Naive thymus-derived CD4-positive, alpha-beta T cell (primary cell): ENCODE measurements at regions of chr1 and their contacts with region 1.

Region 1: GRCh38 chr1:179954493-179955297 is at the start of gene CEP350:
- DNase-seq: peak; percentile 93 to 99 (median 98)
- ATAC-seq: peak; percentile 92
- H3K4me3 ChIP-seq: peak within 1 kb of the TSS; percentile 67
- H3K4me3 Mint-ChIP-seq: peak within 1 kb of the TSS; percentile 81 to 97 (median 93)
- H3K27ac ChIP-seq: peak within 1 kb of the TSS; percentile 95
- H3K27ac Mint-ChIP-seq: peak within 1 kb of the TSS; percentile 91 to 99 (median 97)
- H3K4me1 ChIP-seq: peaks cover 32 to 42% of the 10 kb centered on the region in 2 donors
- H3K4me1 Mint-ChIP-seq: peaks cover 34 to 72% (median 62%) of the 10 kb centered on the region in 7 donors
- H3K27me3 ChIP-seq: no peaks in the 10 kb centered on the region
- H3K27me3 Mint-ChIP-seq: no peaks in the 10 kb centered on the region
- total RNA-seq, gene CEP350: 56.1 to 90.1 (median 64.4) TPM

Region 2: GRCh38 chr1:179129702-179130473 is 824.8 kb before region 1 on chr1:
- CTCF ChIA-PET with region 1: no interaction called
- POLR2A ChIA-PET with region 1: no interaction called
- intact Hi-C with region 1: loop called in 1 of 2 experiments (anchors 1 kb)
- DNase-seq: peak in 8 of 9 donors; percentile 28 to 83 (median 72)
- ATAC-seq: peak; percentile 95
- H3K4me3 ChIP-seq: peak overlapping the region; percentile 38
- H3K4me3 Mint-ChIP-seq: peak overlapping the region; percentile 63 to 93 (median 80)
- H3K27ac ChIP-seq: peak overlapping the region; percentile 79
- H3K27ac Mint-ChIP-seq: peak overlapping the region; percentile 87 to 96 (median 94)
- H3K4me1 ChIP-seq: peaks cover 4 to 17% of the 10 kb centered on the region in 2 donors
- H3K4me1 Mint-ChIP-seq: peaks cover 3 to 33% (median 22%) of the 10 kb centered on the region in 7 donors
- H3K27me3 ChIP-seq: no peaks in the 10 kb centered on the region
- H3K27me3 Mint-ChIP-seq: no peaks in the 10 kb centered on the region

Region 3: GRCh38 chr1:179917601-179918429 is 36.9 kb before region 1 on chr1:
- CTCF ChIA-PET with region 1: interaction called, 3 read pairs
- POLR2A ChIA-PET with region 1: interaction called, 3 read pairs
- intact Hi-C with region 1: loop called in 1 of 2 experiments (anchors 5 kb)
- DNase-seq: no peak
- ATAC-seq: no peak
- H3K4me3 ChIP-seq: no peak overlapping the region
- H3K4me3 Mint-ChIP-seq: no peak overlapping the region
- H3K27ac ChIP-seq: no peak overlapping the region
- H3K27ac Mint-ChIP-seq: peak overlapping the region in 1 of 9 donors; percentile 20
- H3K4me1 ChIP-seq: no peaks in the 10 kb centered on the region
- H3K4me1 Mint-ChIP-seq: peaks cover 0 to 7% (median 2%) of the 10 kb centered on the region in 7 donors
- H3K27me3 ChIP-seq: no peaks in the 10 kb centered on the region
- H3K27me3 Mint-ChIP-seq: no peaks in the 10 kb centered on the region

Region 4: DNA sequence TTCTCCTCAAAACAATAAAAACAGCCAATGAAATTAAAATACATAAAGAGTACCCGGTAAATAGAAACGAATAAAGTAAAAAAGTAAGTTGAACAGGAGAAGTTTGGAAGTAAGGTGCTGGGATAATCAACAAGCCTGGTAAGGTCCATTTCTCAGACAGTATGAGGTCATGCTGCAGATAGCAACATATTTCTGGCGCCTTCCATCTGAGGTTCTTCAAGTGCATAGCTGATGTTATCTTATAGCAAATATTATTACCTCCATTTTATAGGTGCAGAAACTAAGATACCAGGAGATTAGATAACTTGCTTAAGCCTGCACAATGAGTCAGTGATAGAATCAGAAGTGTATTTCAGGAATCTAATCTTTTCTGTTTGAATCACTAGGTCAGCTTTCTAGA is 23.8 kb before region 1 on chr1:
- CTCF ChIA-PET with region 1: no interaction called
- POLR2A ChIA-PET with region 1: no interaction called
- intact Hi-C with region 1: no loop called
- DNase-seq: no peak
- ATAC-seq: no peak
- H3K4me3 ChIP-seq: no peak overlapping the region
- H3K4me3 Mint-ChIP-seq: no peak overlapping the region
- H3K27ac ChIP-seq: no peak overlapping the region
- H3K27ac Mint-ChIP-seq: no peak overlapping the region
- H3K4me1 ChIP-seq: no peaks in the 10 kb centered on the region
- H3K4me1 Mint-ChIP-seq: no peaks in the 10 kb centered on the region
- H3K27me3 ChIP-seq: no peaks in the 10 kb centered on the region
- H3K27me3 Mint-ChIP-seq: peaks cover 0 to 25% (median 6%) of the 10 kb centered on the region in 5 donors

Region 5: DNA sequence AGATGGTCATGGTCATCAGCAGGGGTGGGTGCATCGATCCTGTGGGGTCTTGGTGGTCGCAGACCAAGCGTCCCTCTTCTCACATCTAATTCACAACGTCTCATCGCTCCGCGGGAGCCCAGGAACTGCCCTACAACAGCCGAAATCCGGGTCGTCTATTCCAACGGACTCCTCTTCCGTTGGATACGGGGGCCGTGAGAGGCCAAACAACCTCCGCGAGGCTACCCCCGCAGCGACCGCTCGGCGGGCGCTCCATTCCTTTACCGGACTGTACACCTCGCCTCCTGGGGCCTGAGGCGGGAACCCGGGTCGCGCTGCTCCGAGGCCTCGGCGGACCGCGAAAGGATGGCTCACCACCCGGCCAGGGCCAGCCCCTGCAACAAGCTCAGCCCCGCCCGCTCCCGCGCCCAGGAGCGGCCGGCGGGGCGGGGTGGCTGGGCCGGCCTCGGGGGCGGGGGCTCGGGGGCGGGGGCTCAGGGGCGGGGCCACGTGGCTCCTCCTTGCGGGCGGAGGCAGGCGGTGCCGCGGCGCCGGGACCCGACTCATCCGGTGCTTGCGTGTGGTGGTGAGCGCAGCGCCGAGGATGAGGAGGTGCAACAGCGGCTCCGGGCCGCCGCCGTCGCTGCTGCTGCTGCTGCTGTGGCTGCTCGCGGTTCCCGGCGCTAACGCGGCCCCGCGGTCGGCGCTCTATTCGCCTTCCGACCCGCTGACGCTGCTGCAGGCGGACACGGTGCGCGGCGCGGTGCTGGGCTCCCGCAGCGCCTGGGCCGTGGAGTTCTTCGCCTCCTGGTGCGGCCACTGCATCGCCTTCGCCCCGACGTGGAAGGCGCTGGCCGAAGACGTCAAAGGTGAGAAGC is 199.9 kb after region 1 on chr1 and contains the start of gene QSOX1:
- CTCF ChIA-PET with region 1: no interaction called
- POLR2A ChIA-PET with region 1: interaction called, 4 read pairs
- intact Hi-C with region 1: loop called (anchors 1 kb)
- DNase-seq: peak; percentile 81 to 89 (median 86)
- ATAC-seq: peak; percentile 97
- H3K4me3 ChIP-seq: peak within 1 kb of the TSS; percentile 94
- H3K4me3 Mint-ChIP-seq: peak within 1 kb of the TSS; percentile 80 to 99 (median 91)
- H3K27ac ChIP-seq: peak within 1 kb of the TSS; percentile 78
- H3K27ac Mint-ChIP-seq: peak within 1 kb of the TSS; percentile 81 to 95 (median 86)
- H3K4me1 ChIP-seq: peaks cover 7 to 20% of the 10 kb centered on the region in 2 donors
- H3K4me1 Mint-ChIP-seq: peaks cover 24 to 45% (median 37%) of the 10 kb centered on the region in 7 donors
- H3K27me3 ChIP-seq: no peaks in the 10 kb centered on the region
- H3K27me3 Mint-ChIP-seq: no peaks in the 10 kb centered on the region
- total RNA-seq, gene QSOX1: 22.1 to 55.6 (median 25.6) TPM

Region 6: DNA sequence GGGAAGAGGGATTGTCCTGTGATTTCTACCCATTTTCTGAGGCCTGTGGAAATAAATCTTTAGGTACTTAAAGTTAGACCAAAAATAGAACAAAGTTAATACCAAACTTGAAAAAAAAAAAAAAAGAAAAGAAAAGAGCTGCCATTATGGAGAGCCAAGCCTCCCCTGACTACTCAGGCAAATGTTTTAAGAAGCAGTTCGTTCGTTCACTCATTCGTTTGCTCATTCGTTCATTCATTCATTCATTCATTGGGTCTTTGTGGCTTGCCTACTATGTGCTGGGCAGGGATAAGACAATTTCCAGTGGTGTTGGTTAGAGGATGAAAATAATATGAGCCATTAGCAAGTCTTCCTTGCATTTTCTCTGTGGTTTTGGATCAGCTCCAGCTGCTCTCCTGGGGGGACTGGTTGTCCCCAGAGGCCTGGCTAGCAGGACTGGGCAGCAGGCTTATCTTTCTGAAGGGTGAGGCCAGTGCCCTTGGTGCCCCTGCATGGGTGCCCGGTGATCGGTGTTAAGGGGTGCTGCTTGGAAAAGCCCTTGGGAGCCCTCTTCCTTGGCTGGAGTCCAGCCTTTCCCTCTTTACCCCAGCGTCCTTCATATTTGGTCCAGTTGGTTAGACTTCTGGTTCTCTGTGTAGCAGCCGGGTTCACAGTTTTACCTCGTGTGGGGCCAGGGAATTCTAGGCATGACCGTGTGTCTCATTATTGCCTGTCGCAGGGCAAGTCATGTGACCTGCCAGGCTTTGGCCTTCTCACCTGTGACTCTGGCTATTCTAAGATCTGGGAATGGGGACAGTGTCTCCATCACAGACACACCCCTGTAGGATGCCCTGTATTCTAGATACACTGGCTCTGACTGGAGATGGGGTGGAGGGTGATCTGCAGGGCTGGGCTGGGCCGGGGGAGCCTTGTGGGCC is 308.1 kb after region 1 on chr1:
- CTCF ChIA-PET with region 1: no interaction called
- POLR2A ChIA-PET with region 1: no interaction called
- intact Hi-C with region 1: no loop called
- DNase-seq: no peak
- ATAC-seq: no peak
- H3K4me3 ChIP-seq: no peak overlapping the region
- H3K4me3 Mint-ChIP-seq: no peak overlapping the region
- H3K27ac ChIP-seq: no peak overlapping the region
- H3K27ac Mint-ChIP-seq: no peak overlapping the region
- H3K4me1 ChIP-seq: no peaks in the 10 kb centered on the region
- H3K4me1 Mint-ChIP-seq: peaks cover 0 to 4% (median 0%) of the 10 kb centered on the region in 7 donors
- H3K27me3 ChIP-seq: no peaks in the 10 kb centered on the region
- H3K27me3 Mint-ChIP-seq: peaks cover 0 to 10% (median 5%) of the 10 kb centered on the region in 5 donors

Region 7: DNA sequence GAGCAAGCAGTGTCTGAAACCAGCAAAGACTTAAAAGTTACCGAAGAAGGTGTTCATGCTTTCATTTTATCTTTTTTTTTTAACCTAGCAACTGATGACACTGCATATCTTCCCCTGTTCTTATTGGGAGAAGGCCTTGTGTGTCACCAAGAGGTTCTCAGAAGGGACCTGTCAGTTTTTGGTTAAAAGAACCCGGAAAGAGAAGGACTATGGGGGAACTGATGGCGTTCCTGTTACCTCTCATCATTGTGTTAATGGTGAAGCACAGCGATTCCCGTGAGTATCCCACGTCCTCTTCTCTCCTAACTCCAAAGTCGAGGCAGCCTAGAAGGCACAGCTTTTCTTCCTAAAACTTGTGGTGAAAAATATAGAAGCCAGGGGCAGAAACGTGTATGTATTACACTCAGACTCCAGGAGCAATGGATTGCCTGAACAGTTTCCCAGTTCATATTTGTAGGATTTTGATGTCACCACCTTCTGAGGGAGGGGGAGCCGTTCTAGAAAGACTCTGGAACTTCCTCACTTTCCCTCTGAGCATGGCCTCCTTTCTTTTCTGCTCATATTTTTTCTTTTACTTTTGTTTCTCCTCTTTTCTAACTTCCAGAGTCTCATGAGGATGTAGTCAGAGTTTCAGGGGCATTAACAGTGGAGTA is 1079.2 kb after region 1 on chr1 and contains the start of gene MR1:
- CTCF ChIA-PET with region 1: no interaction called
- POLR2A ChIA-PET with region 1: interaction called, 3 read pairs
- intact Hi-C with region 1: loop called in 1 of 2 experiments (anchors 1 kb)
- DNase-seq: peak in 8 of 9 donors; percentile 32 to 92 (median 88)
- ATAC-seq: peak; percentile 97
- H3K4me3 ChIP-seq: peak within 1 kb of the TSS; percentile 77
- H3K4me3 Mint-ChIP-seq: peak within 1 kb of the TSS; percentile 84 to 99 (median 97)
- H3K27ac ChIP-seq: peak within 1 kb of the TSS; percentile 95
- H3K27ac Mint-ChIP-seq: peak within 1 kb of the TSS; percentile 95 to 100 (median 98)
- H3K4me1 ChIP-seq: peaks cover 32 to 42% of the 10 kb centered on the region in 2 donors
- H3K4me1 Mint-ChIP-seq: peaks cover 39 to 69% (median 61%) of the 10 kb centered on the region in 7 donors
- H3K27me3 ChIP-seq: no peaks in the 10 kb centered on the region
- H3K27me3 Mint-ChIP-seq: peaks cover 0 to 6% (median 0%) of the 10 kb centered on the region in 5 donors
- total RNA-seq, gene MR1: 19.8 to 35.8 (median 29.7) TPM